ENCODE measurements at regions of chr15 and their contacts with region 1.

Region 1: DNA sequence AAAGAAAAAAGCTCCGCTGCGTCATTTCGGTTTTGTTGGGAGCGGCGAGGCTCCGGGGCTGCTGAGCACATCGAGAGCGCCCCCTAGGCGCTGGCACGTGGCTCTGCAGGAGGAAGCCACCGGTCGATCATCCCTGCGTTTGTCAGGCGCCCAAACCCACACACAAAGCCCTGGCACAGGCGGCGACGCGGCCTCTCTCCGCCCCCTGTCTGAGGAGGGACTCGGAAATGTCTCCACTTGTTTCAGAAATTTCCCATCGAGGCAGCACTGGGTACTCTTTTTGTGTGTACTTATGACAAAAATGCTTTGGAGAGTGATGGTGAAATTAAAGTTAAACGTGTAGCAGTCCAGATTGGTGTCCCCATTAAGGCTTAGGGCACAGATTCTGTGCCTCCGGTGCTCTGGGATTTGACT is 407.3 kb upstream of the ONECUT1 start:
- DNase-seq: peak; percentile 24
- ATAC-seq: peak; percentile 91
- H3K4me3 ChIP-seq: no peak overlapping the region
- H3K27ac ChIP-seq: no peak overlapping the region
- H3K4me1 ChIP-seq: no peaks in the 10 kb centered on the region
- H3K27me3 ChIP-seq: 0 out of 2 replicates have a peak, but pooled peaks cover 3% of the 10 kb centered on the region
- CTCF ChIP-seq: peak; percentile 23 to 81 (median 72); a peak in 4 of 6 replicates
- POLR2A ChIP-seq: no peak
- RAD21 ChIP-seq: peak; percentile 51; the same call in 1 of the 2 replicates

Region 2: GRCh38 chr15:52780172-52780980 is 417.1 kb before region 1 on chr15:
- CTCF ChIA-PET with region 1: interaction called, 3 read pairs
- POLR2A ChIA-PET with region 1: no interaction called
- RAD21 ChIA-PET with region 1: no interaction called
- intact Hi-C with region 1: loop called (anchors 2 kb)
- DNase-seq: peak; percentile 24
- ATAC-seq: peak; percentile 86
- H3K4me3 ChIP-seq: no peak overlapping the region
- H3K27ac ChIP-seq: no peak overlapping the region
- H3K4me1 ChIP-seq: no peaks in the 10 kb centered on the region
- H3K27me3 ChIP-seq: peaks cover 34% of the 10 kb centered on the region; the same call in 1 of the 2 replicates
- CTCF ChIP-seq: peak; percentile 46 to 98 (median 92); a peak in 5 of 6 replicates
- POLR2A ChIP-seq: no peak
- RAD21 ChIP-seq: peak; percentile 75

Region 3: GRCh38 chr15:52812815-52813214 is 384.6 kb before region 1 on chr15:
- CTCF ChIA-PET with region 1: no interaction called
- POLR2A ChIA-PET with region 1: no interaction called
- RAD21 ChIA-PET with region 1: no interaction called
- intact Hi-C with region 1: loop called (anchors 10 kb)
- DNase-seq: no peak
- ATAC-seq: no peak
- H3K4me3 ChIP-seq: no peak overlapping the region
- H3K27ac ChIP-seq: no peak overlapping the region
- H3K4me1 ChIP-seq: no peaks in the 10 kb centered on the region
- H3K27me3 ChIP-seq: peaks cover 35% of the 10 kb centered on the region
- CTCF ChIP-seq: no peak
- POLR2A ChIP-seq: no peak
- RAD21 ChIP-seq: no peak

Region 4: GRCh38 chr15:53307952-53308621 is 110.7 kb after region 1 on chr15:
- CTCF ChIA-PET with region 1: no interaction called
- POLR2A ChIA-PET with region 1: no interaction called
- RAD21 ChIA-PET with region 1: no interaction called
- intact Hi-C with region 1: no loop called
- DNase-seq: no peak
- ATAC-seq: no peak
- H3K4me3 ChIP-seq: no peak overlapping the region
- H3K27ac ChIP-seq: no peak overlapping the region
- H3K4me1 ChIP-seq: no peaks in the 10 kb centered on the region
- H3K27me3 ChIP-seq: no peaks in the 10 kb centered on the region
- CTCF ChIP-seq: 0 out of 6 replicates have a peak, but pooled peaks of 1 of the 3 experiments have one; percentile 11
- POLR2A ChIP-seq: no peak
- RAD21 ChIP-seq: no peak

Measured in HCT116 (cell line).